ENCODE measurements at regions of chr20 and their contacts with region 1.

Region 1: DNA sequence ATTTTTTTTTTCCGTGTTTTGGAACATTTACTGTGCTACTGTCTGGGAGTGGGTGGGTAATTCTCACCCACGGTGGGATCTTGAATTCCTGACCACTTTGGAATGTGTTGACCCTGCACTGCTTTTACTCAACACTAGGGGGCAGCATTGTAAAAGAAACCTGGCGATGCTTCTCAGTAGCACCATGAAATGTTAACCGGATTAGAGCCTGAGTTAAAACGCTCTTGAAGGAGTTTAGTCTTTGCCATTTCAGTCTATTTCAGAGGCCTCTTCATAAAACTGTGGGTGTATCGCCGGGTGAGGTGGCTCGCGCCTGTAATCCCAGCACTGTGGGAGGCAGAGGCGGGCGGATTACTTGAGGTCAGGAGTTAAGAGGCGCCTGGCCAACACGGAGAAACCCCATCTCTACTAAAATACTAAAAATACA is 114.4 kb upstream of the PRND start:
- DNase-seq: peak; percentile 90
- H3K4me3 ChIP-seq: no peak overlapping the region
- H3K27ac ChIP-seq: no peak overlapping the region
- H3K4me1 ChIP-seq: no peaks in the 10 kb centered on the region
- H3K27me3 ChIP-seq: no peaks in the 10 kb centered on the region
- CTCF ChIP-seq: peak; percentile 92

Region 2: GRCh38 chr20:4108495-4109306 is 498.6 kb before region 1 on chr20:
- CTCF ChIA-PET with region 1: no interaction called
- POLR2A ChIA-PET with region 1: no interaction called
- intact Hi-C with region 1: loop called (anchors 2 kb)
- DNase-seq: peak; percentile 88
- H3K4me3 ChIP-seq: no peak overlapping the region
- H3K27ac ChIP-seq: peak overlapping the region; percentile 58
- H3K4me1 ChIP-seq: peaks cover 30% of the 10 kb centered on the region
- H3K27me3 ChIP-seq: no peaks in the 10 kb centered on the region
- CTCF ChIP-seq: peak; percentile 94

Region 3: GRCh38 chr20:4519530-4519929 is 87.8 kb before region 1 on chr20:
- CTCF ChIA-PET with region 1: no interaction called
- POLR2A ChIA-PET with region 1: no interaction called
- intact Hi-C with region 1: no loop called
- DNase-seq: peak; percentile 56
- H3K4me3 ChIP-seq: no peak overlapping the region
- H3K27ac ChIP-seq: no peak overlapping the region
- H3K4me1 ChIP-seq: peaks cover 17% of the 10 kb centered on the region
- H3K27me3 ChIP-seq: no peaks in the 10 kb centered on the region
- CTCF ChIP-seq: peak; percentile 62

Region 4: DNA sequence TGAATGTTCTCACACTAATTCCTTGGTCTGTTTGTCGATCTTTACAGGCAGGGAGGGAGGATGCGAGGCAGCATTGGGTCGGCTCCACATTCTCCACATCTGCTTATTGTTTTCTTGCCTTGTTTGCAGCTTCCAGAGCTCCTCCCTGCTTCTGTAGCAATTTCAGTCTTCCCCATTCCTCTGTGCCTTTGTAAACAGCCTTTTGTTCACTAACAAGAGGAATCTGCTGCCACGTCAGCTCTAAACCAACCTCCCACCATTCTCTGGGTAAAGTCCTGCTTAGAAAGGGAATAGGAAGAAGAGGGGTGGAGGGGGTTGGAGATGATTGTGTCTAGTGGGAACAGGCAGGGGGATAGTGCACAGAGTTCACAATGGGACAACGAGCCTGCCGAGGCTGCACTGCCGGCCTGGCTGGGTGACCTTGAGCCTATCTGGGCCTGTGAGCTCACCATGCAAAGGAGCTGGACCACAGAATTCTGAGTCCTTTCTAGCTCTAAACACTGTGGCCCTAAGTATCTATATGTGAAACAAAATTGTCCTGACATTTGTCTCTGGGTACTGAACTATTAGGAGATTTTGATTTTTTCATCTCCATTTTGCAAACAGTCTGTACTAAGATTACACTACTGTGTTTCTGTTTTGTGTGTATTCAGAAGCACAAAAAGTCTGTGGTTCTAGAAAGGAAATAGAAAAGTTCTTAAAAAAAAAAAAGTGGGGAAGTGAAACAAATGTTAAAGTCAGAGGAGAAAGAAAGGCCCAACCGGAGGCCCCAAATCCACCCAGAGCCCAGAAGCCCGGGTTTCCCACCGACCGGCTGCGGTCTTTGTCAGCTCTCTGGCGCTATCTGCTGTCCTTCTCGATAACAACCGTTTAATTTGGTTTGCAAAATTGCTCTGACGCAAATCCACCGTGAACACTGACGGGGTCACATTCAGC is 113.0 kb after region 1 on chr20:
- CTCF ChIA-PET with region 1: no interaction called
- POLR2A ChIA-PET with region 1: no interaction called
- intact Hi-C with region 1: loop called (anchors 1 kb)
- DNase-seq: peak; percentile 88
- H3K4me3 ChIP-seq: no peak overlapping the region
- H3K27ac ChIP-seq: peak overlapping the region; percentile 58
- H3K4me1 ChIP-seq: peaks cover 6% of the 10 kb centered on the region
- H3K27me3 ChIP-seq: no peaks in the 10 kb centered on the region
- CTCF ChIP-seq: peak; percentile 82

Region 5: GRCh38 chr20:4956200-4956810 is 349.0 kb after region 1 on chr20:
- CTCF ChIA-PET with region 1: no interaction called
- POLR2A ChIA-PET with region 1: no interaction called
- intact Hi-C with region 1: loop called (anchors 5 kb)
- DNase-seq: peak; percentile 71
- H3K4me3 ChIP-seq: no peak overlapping the region
- H3K27ac ChIP-seq: no peak overlapping the region
- H3K4me1 ChIP-seq: peaks cover 4% of the 10 kb centered on the region
- H3K27me3 ChIP-seq: no peaks in the 10 kb centered on the region
- CTCF ChIP-seq: peak; percentile 82

Region 6: GRCh38 chr20:4971064-4971463 is 363.8 kb after region 1 on chr20:
- CTCF ChIA-PET with region 1: no interaction called
- POLR2A ChIA-PET with region 1: no interaction called
- intact Hi-C with region 1: no loop called
- DNase-seq: no peak
- H3K4me3 ChIP-seq: no peak overlapping the region
- H3K27ac ChIP-seq: no peak overlapping the region
- H3K4me1 ChIP-seq: no peaks in the 10 kb centered on the region
- H3K27me3 ChIP-seq: no peaks in the 10 kb centered on the region
- CTCF ChIP-seq: no peak

Region 7: DNA sequence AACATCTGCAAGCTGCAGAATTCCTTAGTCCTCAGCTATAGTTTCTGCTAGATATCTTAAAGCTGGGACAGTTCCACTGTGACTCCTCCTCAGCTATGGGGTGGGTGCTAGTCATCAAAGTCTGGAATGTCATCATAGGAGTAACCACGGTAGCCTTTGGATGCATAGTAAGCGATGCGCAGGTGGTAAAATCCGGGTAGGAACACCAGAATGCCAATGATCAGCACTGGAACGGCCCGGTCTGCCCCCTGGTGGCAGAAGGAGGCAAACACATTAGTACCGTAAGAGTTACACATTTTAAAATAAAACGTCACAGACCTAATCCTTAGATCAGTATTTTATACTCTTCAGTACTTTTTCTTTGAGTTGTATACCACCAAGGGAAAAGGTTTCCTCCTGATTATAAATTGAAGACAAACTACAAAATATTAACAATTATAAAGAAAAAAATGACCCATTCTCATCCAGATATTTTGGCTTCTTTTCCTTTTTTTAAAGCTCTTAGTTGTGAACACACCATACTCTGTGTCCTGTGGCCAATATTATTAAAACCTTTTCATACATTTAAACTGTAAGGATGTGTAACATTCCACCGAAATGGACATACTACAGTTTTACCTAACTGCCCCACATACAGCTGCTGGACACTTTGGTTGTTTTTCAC is 493.5 kb after region 1 on chr20:
- CTCF ChIA-PET with region 1: no interaction called
- POLR2A ChIA-PET with region 1: no interaction called
- intact Hi-C with region 1: loop called (anchors 5 kb)
- DNase-seq: peak; percentile 76
- H3K4me3 ChIP-seq: no peak overlapping the region
- H3K27ac ChIP-seq: no peak overlapping the region
- H3K4me1 ChIP-seq: no peaks in the 10 kb centered on the region
- H3K27me3 ChIP-seq: no peaks in the 10 kb centered on the region
- CTCF ChIP-seq: peak; percentile 82

Measured in A673 (cell line).